Left cardiac atrium (tissue), 4 donors: ENCODE measurements at regions of chr19 and their contacts with region 1.

Region 1: DNA sequence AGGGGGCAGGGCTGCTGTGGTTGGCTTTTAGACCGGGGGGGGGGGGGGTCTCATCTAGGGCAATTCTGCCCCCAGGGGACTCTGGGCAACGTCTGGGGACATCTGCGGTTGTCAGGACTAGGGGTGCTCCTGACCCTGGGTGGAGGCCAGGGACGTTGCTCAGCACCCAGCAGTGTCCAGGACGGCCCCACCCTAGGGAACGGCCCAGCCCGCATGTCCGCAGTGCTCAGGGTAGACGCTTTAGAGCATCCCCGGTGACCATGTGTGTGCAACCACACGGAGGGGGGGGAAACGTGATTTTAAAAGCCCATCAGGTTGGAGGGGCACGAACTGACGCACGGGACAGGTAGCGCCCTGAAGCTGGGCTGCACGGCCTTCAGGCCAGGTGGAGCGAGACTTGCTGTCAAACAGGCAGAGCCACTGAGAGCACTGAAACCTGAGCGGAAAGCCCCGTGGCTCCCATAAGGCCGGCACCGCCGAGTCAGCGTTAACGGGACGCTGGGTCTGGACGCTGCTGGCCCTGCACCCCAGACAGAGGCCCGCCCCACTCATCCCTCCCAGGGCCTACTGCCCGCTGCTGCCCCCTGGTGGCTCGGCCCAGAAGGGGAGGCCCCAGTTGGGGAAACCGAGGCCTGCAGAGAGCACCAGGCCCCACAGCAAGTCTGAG is 8.3 kb downstream of the CACTIN start:
- DNase-seq: peak; percentile 81
- ATAC-seq: peak; percentile 79 to 84

Region 2: GRCh38 chr19:3544742-3545668 is 73.3 kb before region 1 on chr19:
- intact Hi-C with region 1: loop called in 1 of 2 experiments (anchors 2 kb)
- DNase-seq: peak; percentile 74
- ATAC-seq: peak; percentile 66 to 72

Region 3: GRCh38 chr19:3557461-3558248 is 60.6 kb before region 1 on chr19 and contains the start of gene MFSD12:
- intact Hi-C with region 1: loop called in 1 of 2 experiments (anchors 5 kb)
- DNase-seq: peak; percentile 96
- ATAC-seq: peak; percentile 98 to 99
- total RNA-seq, gene MFSD12: 29.8 to 40.4 TPM

Region 4: GRCh38 chr19:3575260-3575741 is 43.0 kb before region 1 on chr19:
- intact Hi-C with region 1: loop called in 1 of 2 experiments (anchors 5 kb)
- DNase-seq: no peak
- ATAC-seq: no peak

Region 5: DNA sequence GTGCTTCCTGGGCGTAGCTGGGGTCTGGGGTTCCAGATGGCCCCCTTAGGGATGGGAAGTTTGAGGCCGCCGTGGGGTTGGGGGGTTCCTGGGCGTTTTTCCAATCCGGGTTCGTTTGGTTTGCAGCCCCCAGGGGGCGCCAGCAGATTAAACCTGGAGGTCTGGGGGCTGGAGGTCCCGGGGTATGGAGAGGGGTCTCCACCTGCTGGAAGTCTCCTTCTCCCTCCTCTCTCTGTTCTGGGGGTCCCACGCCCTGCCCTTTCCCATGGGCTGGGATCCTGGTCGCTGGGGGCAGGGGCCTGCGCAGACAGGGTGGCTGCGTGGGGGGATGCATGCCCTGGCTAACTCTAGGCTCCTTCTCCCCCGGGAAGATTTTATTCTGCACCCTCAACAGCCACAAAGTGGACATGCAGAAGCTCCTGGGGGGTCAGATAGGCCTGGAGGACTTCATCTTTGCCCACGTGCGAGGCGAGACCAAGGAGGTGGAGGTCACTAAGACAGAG is 32.1 kb before region 1 on chr19:
- intact Hi-C with region 1: loop called in 1 of 2 experiments (anchors 2 kb)
- DNase-seq: no peak
- ATAC-seq: peak in 1 of 2 donors; percentile 33